ENCODE measurements at regions of chr11 and their contacts with region 1.

Region 1: GRCh38 chr11:96054870-96055705 is 131.2 kb upstream of the MTMR2 start:
- DNase-seq: peak; percentile 64
- ATAC-seq: no peak
- H3K4me3 ChIP-seq: no peak overlapping the region
- H3K27ac ChIP-seq: 0 out of 2 replicates have a peak overlapping the region, but pooled peaks have one; percentile 37
- H3K4me1 ChIP-seq: peaks cover 33% of the 10 kb centered on the region
- H3K27me3 ChIP-seq: no peaks in the 10 kb centered on the region
- CTCF ChIP-seq: peak; percentile 63
- POLR2A ChIP-seq: no peak
- RAD21 ChIP-seq: peak; percentile 64

Region 2: DNA sequence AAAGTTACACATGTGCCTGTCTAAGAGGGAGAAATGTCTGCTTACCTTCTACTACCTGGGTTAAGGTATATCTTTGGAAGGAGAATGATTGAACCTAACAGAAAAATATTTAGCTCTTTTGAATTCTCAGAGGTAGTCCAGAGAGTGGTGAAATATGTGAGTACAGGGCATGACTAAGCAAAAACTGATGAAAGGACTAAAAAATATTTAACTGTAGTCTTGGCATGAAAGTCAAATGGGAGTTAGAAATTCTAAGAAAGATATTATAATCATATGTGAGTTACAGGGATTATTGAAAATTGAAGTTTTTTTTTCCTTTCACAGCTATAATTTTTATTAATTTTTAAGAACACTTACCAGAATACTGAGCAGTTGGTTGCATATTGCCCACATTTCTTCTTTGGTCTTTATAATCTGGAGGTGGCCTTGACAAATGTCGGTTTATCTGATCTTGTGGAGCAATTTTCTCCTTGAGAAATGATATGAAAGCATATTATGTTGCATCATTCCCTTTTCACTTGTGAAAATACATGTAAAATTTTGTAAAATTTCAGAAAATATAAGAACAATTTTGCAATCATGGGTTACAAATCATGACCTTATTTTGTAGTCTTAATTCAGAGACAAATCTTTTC is 69.8 kb before region 1 on chr11:
- CTCF ChIA-PET with region 1: no interaction called
- POLR2A ChIA-PET with region 1: no interaction called
- dilution Hi-C with region 1: no loop called
- in situ Hi-C with region 1: no loop called
- intact Hi-C with region 1: no loop called
- DNase-seq: peak; percentile 60
- ATAC-seq: 0 out of 2 replicates have a peak, but pooled peaks have one; percentile 29
- H3K4me3 ChIP-seq: no peak overlapping the region
- H3K27ac ChIP-seq: no peak overlapping the region
- H3K4me1 ChIP-seq: no peaks in the 10 kb centered on the region; the same call in 1 of the 2 replicates
- H3K27me3 ChIP-seq: no peaks in the 10 kb centered on the region
- CTCF ChIP-seq: no peak
- POLR2A ChIP-seq: no peak
- RAD21 ChIP-seq: no peak

Region 3: GRCh38 chr11:96008161-96008720 is 46.8 kb before region 1 on chr11:
- CTCF ChIA-PET with region 1: no interaction called
- POLR2A ChIA-PET with region 1: no interaction called
- dilution Hi-C with region 1: no loop called
- in situ Hi-C with region 1: no loop called
- intact Hi-C with region 1: no loop called
- DNase-seq: peak; percentile 95
- ATAC-seq: peak; percentile 84
- H3K4me3 ChIP-seq: no peak overlapping the region
- H3K27ac ChIP-seq: peak overlapping the region; percentile 37; the same call in 1 of the 2 replicates
- H3K4me1 ChIP-seq: peaks cover 9% of the 10 kb centered on the region
- H3K27me3 ChIP-seq: no peaks in the 10 kb centered on the region
- CTCF ChIP-seq: no peak
- POLR2A ChIP-seq: no peak
- RAD21 ChIP-seq: no peak

Region 4: GRCh38 chr11:96155627-96156378 is 100.7 kb after region 1 on chr11:
- CTCF ChIA-PET with region 1: interaction called, 4 read pairs
- POLR2A ChIA-PET with region 1: no interaction called
- dilution Hi-C with region 1: no loop called
- in situ Hi-C with region 1: no loop called
- intact Hi-C with region 1: loop called (anchors 1 kb)
- DNase-seq: peak; percentile 97
- ATAC-seq: peak; percentile 79
- H3K4me3 ChIP-seq: peak overlapping the region; percentile 8; the same call in 1 of the 2 replicates
- H3K27ac ChIP-seq: peak overlapping the region; percentile 86
- H3K4me1 ChIP-seq: peaks cover 26% of the 10 kb centered on the region
- H3K27me3 ChIP-seq: no peaks in the 10 kb centered on the region
- CTCF ChIP-seq: peak; percentile 41
- POLR2A ChIP-seq: peak; percentile 43; the same call in 1 of the 2 replicates
- RAD21 ChIP-seq: peak; percentile 29

Region 5: GRCh38 chr11:96215110-96215782 is 160.2 kb after region 1 on chr11:
- CTCF ChIA-PET with region 1: interaction called, 3 read pairs
- POLR2A ChIA-PET with region 1: no interaction called
- dilution Hi-C with region 1: no loop called
- in situ Hi-C with region 1: no loop called
- intact Hi-C with region 1: loop called (anchors 10 kb)
- DNase-seq: peak; percentile 76
- ATAC-seq: peak; percentile 55
- H3K4me3 ChIP-seq: no peak overlapping the region
- H3K27ac ChIP-seq: peak overlapping the region; percentile 88
- H3K4me1 ChIP-seq: peaks cover 39% of the 10 kb centered on the region
- H3K27me3 ChIP-seq: no peaks in the 10 kb centered on the region
- CTCF ChIP-seq: no peak
- POLR2A ChIP-seq: no peak
- RAD21 ChIP-seq: no peak

Region 6: GRCh38 chr11:96235751-96236150 is 180.7 kb after region 1 on chr11:
- CTCF ChIA-PET with region 1: no interaction called
- POLR2A ChIA-PET with region 1: no interaction called
- dilution Hi-C with region 1: no loop called
- in situ Hi-C with region 1: no loop called
- intact Hi-C with region 1: loop called (anchors 5 kb)
- DNase-seq: peak; percentile 73
- ATAC-seq: peak; percentile 74
- H3K4me3 ChIP-seq: no peak overlapping the region
- H3K27ac ChIP-seq: peak overlapping the region; percentile 84; the same call in 1 of the 2 replicates
- H3K4me1 ChIP-seq: peaks cover 19% of the 10 kb centered on the region
- H3K27me3 ChIP-seq: no peaks in the 10 kb centered on the region
- CTCF ChIP-seq: no peak
- POLR2A ChIP-seq: no peak
- RAD21 ChIP-seq: no peak

Region 7: GRCh38 chr11:96389720-96390487 is 334.8 kb after region 1 on chr11 and contains the starts of genes CCDC82 and JRKL:
- CTCF ChIA-PET with region 1: interaction called, 3 read pairs
- POLR2A ChIA-PET with region 1: no interaction called
- dilution Hi-C with region 1: no loop called
- in situ Hi-C with region 1: no loop called
- intact Hi-C with region 1: loop called (anchors 1 kb)
- DNase-seq: peak; percentile 92
- ATAC-seq: peak; percentile 99
- H3K4me3 ChIP-seq: peak within 1 kb of the TSS; percentile 92
- H3K27ac ChIP-seq: peak within 1 kb of the TSS; percentile 91
- H3K4me1 ChIP-seq: no peaks in the 10 kb centered on the region; the same call in 1 of the 2 replicates
- H3K27me3 ChIP-seq: no peaks in the 10 kb centered on the region
- CTCF ChIP-seq: no peak
- POLR2A ChIP-seq: peak; percentile 83
- RAD21 ChIP-seq: no peak
- total RNA-seq, gene CCDC82: 4.1 and 11.7 TPM in 2 replicates
- total RNA-seq, gene JRKL: 5.9 and 10.3 TPM in 2 replicates